ENCODE measurements at regions of chr4 and their contacts with region 1.

Region 1: DNA sequence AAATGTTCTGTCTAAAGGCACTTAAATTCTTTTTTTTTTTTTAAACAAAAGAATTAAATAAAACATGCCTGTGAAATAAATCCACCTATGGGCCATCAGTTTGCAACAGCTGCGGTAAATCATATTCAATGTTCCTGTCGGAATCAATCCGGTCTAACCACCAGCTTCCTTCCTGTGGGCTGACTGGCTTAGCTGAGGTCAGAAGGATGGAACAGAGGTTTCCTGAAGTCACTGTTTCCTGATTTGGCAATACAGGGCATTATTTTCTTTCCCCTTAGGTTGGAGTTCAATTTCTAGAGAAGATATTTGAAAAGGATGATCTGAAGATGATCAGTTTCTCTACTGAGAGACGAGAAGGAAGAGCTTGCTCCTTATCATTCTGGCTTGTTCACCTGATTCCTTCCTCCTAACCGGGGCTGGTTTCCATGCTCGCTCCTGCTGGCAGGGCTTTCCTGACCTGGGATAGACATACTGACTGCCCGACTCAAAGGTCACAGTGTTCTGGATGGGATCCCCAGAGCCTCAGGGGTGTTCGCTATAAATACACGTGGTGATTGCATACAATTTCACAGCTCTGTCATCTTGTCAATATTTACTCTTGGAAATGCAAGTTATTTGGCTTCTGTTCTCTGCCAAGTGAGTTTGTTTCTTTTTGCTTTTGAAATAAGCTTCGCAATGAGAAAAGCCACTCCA is 21.7 kb downstream of the PDLIM3 start:
- DNase-seq: no peak
- H3K4me3 ChIP-seq: no peak overlapping the region
- H3K27ac ChIP-seq: no peak overlapping the region
- H3K4me1 ChIP-seq: no peaks in the 10 kb centered on the region
- CTCF ChIP-seq: no peak

Region 2: GRCh38 chr4:184583738-184584502 is 929.7 kb before region 1 on chr4:
- CTCF ChIA-PET with region 1: interaction called, 10 read pairs
- POLR2A ChIA-PET with region 1: no interaction called
- intact Hi-C with region 1: no loop called
- DNase-seq: peak; percentile 11
- H3K4me3 ChIP-seq: no peak overlapping the region
- H3K27ac ChIP-seq: no peak overlapping the region
- H3K4me1 ChIP-seq: peaks cover 5% of the 10 kb centered on the region
- CTCF ChIP-seq: no peak

Region 3: DNA sequence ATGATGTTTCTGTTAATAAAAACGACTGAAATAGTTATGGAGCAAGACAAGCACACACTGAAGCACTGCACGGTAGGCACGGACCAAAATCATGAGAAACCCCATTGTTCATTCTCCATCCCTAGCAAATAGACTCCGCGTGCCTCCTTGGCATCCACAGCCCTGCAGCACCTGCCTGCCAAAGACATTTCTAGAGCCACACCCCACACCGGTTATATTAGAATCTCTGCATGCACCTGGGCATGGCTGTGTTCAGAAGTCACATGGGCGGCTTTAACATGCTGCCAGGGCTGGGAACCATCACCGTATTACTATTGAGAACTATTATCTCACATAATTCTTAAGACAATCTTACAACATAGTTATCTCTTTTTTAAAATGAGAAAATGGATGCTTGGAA is 15.8 kb after region 1 on chr4:
- CTCF ChIA-PET with region 1: no interaction called
- POLR2A ChIA-PET with region 1: interaction called, 23 read pairs
- intact Hi-C with region 1: no loop called
- DNase-seq: no peak
- H3K4me3 ChIP-seq: no peak overlapping the region
- H3K27ac ChIP-seq: no peak overlapping the region
- H3K4me1 ChIP-seq: no peaks in the 10 kb centered on the region
- CTCF ChIP-seq: no peak

Measured in OCI-LY7 (cell line).